Activated CD8-positive, alpha-beta memory T cell treated with anti-CD3 and anti-CD28 coated beads, Interleukin-2, amount 10 ng/mL, durations not matched to agents 7 days and 5 days (primary cell): ENCODE measurements at regions of chr11 and their contacts with region 1.

Region 1: GRCh38 chr11:64317957-64318693 is at the start of gene PRDX5:
- DNase-seq: peak; percentile 97
- ATAC-seq: peak; percentile 84
- H3K4me3 Mint-ChIP-seq: peak within 1 kb of the TSS; percentile 95
- H3K27ac Mint-ChIP-seq: peak within 1 kb of the TSS; percentile 100
- H3K4me1 Mint-ChIP-seq: peaks cover 40% of the 10 kb centered on the region
- H3K27me3 Mint-ChIP-seq: no peaks in the 10 kb centered on the region
- total RNA-seq, gene PRDX5: 125 to 163 TPM

Region 2: GRCh38 chr11:64240394-64241174 is 77.5 kb before region 1 on chr11 and contains the start of gene FKBP2:
- CTCF ChIA-PET with region 1: interaction called, 10 read pairs
- DNase-seq: peak; percentile 98
- ATAC-seq: peak; percentile 75
- H3K4me3 Mint-ChIP-seq: peak within 1 kb of the TSS; percentile 83
- H3K27ac Mint-ChIP-seq: peak within 1 kb of the TSS; percentile 95
- H3K4me1 Mint-ChIP-seq: peaks cover 47% of the 10 kb centered on the region
- H3K27me3 Mint-ChIP-seq: no peaks in the 10 kb centered on the region
- total RNA-seq, gene FKBP2: 23.4 to 23.9 TPM

Region 3: GRCh38 chr11:64331557-64332371 is 13.6 kb after region 1 on chr11:
- CTCF ChIA-PET with region 1: interaction called, 140 read pairs
- DNase-seq: peak; percentile 96
- ATAC-seq: peak; percentile 95
- H3K4me3 Mint-ChIP-seq: peak overlapping the region; percentile 16
- H3K27ac Mint-ChIP-seq: peak overlapping the region; percentile 83
- H3K4me1 Mint-ChIP-seq: peaks cover 48% of the 10 kb centered on the region
- H3K27me3 Mint-ChIP-seq: no peaks in the 10 kb centered on the region

Region 4: GRCh38 chr11:64341851-64342791 is 24.0 kb after region 1 on chr11:
- CTCF ChIA-PET with region 1: interaction called, 19 read pairs
- DNase-seq: peak; percentile 95
- ATAC-seq: peak; percentile 78
- H3K4me3 Mint-ChIP-seq: peak overlapping the region; percentile 30
- H3K27ac Mint-ChIP-seq: no peak overlapping the region
- H3K4me1 Mint-ChIP-seq: peaks cover 50% of the 10 kb centered on the region
- H3K27me3 Mint-ChIP-seq: no peaks in the 10 kb centered on the region

Region 5: GRCh38 chr11:64358907-64359711 is 41.0 kb after region 1 on chr11 and contains the start of gene RPS6KA4:
- CTCF ChIA-PET with region 1: interaction called, 23 read pairs
- DNase-seq: no peak
- ATAC-seq: peak; percentile 91
- H3K4me3 Mint-ChIP-seq: peak within 1 kb of the TSS; percentile 86
- H3K27ac Mint-ChIP-seq: peak within 1 kb of the TSS; percentile 81
- H3K4me1 Mint-ChIP-seq: peaks cover 41% of the 10 kb centered on the region
- H3K27me3 Mint-ChIP-seq: no peaks in the 10 kb centered on the region
- total RNA-seq, gene RPS6KA4: 31.1 to 41.9 TPM